Caco-2 (cell line): ENCODE measurements at regions of chr17 and their contacts with region 1.

Region 1: DNA sequence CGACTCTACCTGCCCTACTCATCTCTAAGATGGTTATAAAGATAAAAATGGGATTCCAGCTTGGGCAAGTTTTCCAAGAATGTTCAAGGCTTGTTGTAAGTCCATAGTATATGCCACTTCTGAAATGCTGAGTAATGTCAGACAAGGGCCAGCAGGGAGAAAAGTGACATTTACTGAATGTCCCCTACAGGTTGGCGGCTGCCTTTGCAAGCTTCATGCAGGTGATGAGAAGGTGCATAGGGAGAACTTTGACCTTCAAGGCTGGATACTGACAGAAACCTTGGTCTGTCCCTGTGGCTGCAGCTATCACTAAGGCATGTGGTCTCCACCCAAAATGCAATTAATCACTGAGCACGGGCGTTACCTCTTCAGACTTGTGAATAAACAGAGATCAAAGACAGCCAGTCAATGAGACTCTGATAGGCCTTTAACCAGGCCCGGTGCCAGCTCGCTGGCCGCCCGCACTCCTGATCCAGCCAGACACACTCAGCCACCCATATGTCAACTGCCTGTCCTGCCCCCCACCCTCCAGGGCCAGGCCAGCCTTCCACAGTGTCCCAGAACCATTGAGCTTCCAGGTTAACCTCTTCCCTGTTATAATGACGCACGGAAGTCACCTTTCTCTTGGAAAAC is 26.8 kb upstream of the AXIN2 start:
- DNase-seq: peak; percentile 90 to 96
- H3K4me3 ChIP-seq: no peak overlapping the region
- H3K4me3 Mint-ChIP-seq: peak overlapping the region; percentile 5
- H3K27ac Mint-ChIP-seq: peak overlapping the region; percentile 99
- H3K4me1 ChIP-seq: peaks cover 61% of the 10 kb centered on the region
- H3K4me1 Mint-ChIP-seq: peaks cover 50% of the 10 kb centered on the region
- H3K27me3 ChIP-seq: no peaks in the 10 kb centered on the region
- H3K27me3 Mint-ChIP-seq: no peaks in the 10 kb centered on the region
- CTCF ChIP-seq: peak; percentile 71 to 73

Region 2: GRCh38 chr17:65294179-65294720 is 294.0 kb before region 1 on chr17:
- CTCF ChIA-PET with region 1: no interaction called
- POLR2A ChIA-PET with region 1: no interaction called
- intact Hi-C with region 1: loop called (anchors 1 kb)
- DNase-seq: peak; percentile 74 to 78
- H3K4me3 ChIP-seq: no peak overlapping the region
- H3K4me3 Mint-ChIP-seq: no peak overlapping the region
- H3K27ac Mint-ChIP-seq: peak overlapping the region; percentile 25
- H3K4me1 ChIP-seq: peaks cover 13% of the 10 kb centered on the region; the same call in 1 of the 2 replicates
- H3K4me1 Mint-ChIP-seq: peaks cover 15% of the 10 kb centered on the region
- H3K27me3 ChIP-seq: no peaks in the 10 kb centered on the region
- H3K27me3 Mint-ChIP-seq: no peaks in the 10 kb centered on the region
- CTCF ChIP-seq: peak; percentile 88 to 90

Region 3: GRCh38 chr17:65561394-65562205 is 26.7 kb before region 1 on chr17 and contains the start of gene AXIN2:
- CTCF ChIA-PET with region 1: interaction called, 5 read pairs
- POLR2A ChIA-PET with region 1: interaction called, 6 read pairs
- intact Hi-C with region 1: loop called (anchors 1 kb)
- DNase-seq: peak; percentile 96 to 97
- H3K4me3 ChIP-seq: peak within 1 kb of the TSS; percentile 86
- H3K4me3 Mint-ChIP-seq: no peak within 1 kb of the TSS
- H3K27ac Mint-ChIP-seq: peak within 1 kb of the TSS; percentile 91
- H3K4me1 ChIP-seq: peaks cover 44% of the 10 kb centered on the region
- H3K4me1 Mint-ChIP-seq: peaks cover 24% of the 10 kb centered on the region
- H3K27me3 ChIP-seq: no peaks in the 10 kb centered on the region
- H3K27me3 Mint-ChIP-seq: no peaks in the 10 kb centered on the region
- CTCF ChIP-seq: peak; percentile 25 to 33
- total RNA-seq, gene AXIN2: 141 and 168 TPM in 2 replicates

Region 4: GRCh38 chr17:65627891-65628659 is 39.8 kb after region 1 on chr17:
- CTCF ChIA-PET with region 1: no interaction called
- POLR2A ChIA-PET with region 1: no interaction called
- intact Hi-C with region 1: loop called (anchors 2 kb)
- DNase-seq: peak; percentile 57 to 58
- H3K4me3 ChIP-seq: no peak overlapping the region
- H3K4me3 Mint-ChIP-seq: peak overlapping the region; percentile 62
- H3K27ac Mint-ChIP-seq: peak overlapping the region; percentile 39
- H3K4me1 ChIP-seq: peaks cover 33% of the 10 kb centered on the region
- H3K4me1 Mint-ChIP-seq: peaks cover 36% of the 10 kb centered on the region
- H3K27me3 ChIP-seq: no peaks in the 10 kb centered on the region
- H3K27me3 Mint-ChIP-seq: no peaks in the 10 kb centered on the region
- CTCF ChIP-seq: no peak

Region 5: DNA sequence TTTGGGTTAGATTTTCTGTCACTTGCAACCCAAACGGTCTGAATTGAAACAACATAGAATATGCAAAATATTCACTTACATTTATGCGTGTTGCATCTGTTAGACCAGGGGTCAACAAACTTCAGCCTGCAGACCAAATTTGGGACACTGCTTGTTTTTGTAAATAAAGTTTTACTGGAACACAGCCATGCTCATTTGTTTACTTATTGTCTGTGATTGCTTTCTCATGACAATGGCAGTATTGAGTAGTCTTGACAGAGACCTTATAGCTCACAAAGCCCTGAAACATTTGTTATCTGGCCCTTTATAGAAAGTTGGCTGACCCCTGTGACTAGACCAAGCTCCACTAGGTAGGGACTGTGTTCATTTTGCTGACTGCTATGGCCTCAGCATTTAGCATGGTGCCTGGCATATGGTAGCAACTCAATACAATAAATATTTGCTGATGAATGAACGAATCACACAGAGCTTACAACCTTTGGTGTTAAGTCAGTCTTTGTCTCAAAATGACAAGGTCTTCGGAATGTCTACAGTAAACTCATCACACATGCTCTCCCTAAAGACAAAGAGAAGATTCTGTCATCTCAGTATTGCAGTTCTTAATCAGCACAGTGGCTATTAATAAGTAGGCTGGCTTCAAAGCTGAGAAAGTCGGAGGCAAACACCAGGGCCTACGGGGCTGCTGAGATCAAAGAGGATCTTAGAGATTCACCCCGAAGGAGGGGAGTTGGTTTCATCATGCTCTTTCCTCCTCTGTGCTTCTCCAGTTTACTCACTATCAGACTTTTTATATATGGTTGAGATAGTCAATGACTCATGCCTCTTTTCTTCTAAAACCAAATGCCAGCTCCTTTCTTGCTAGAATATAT is 68.3 kb after region 1 on chr17:
- CTCF ChIA-PET with region 1: no interaction called
- POLR2A ChIA-PET with region 1: no interaction called
- intact Hi-C with region 1: loop called (anchors 1 kb)
- DNase-seq: peak; percentile 69 to 75
- H3K4me3 ChIP-seq: no peak overlapping the region
- H3K4me3 Mint-ChIP-seq: no peak overlapping the region
- H3K27ac Mint-ChIP-seq: peak overlapping the region; percentile 53
- H3K4me1 ChIP-seq: peaks cover 39% of the 10 kb centered on the region
- H3K4me1 Mint-ChIP-seq: peaks cover 19% of the 10 kb centered on the region
- H3K27me3 ChIP-seq: no peaks in the 10 kb centered on the region
- H3K27me3 Mint-ChIP-seq: no peaks in the 10 kb centered on the region
- CTCF ChIP-seq: no peak